Naive thymus-derived CD4-positive, alpha-beta T cell (primary cell): ENCODE measurements at regions of chr17 and their contacts with region 1.

Region 1: GRCh38 chr17:78759203-78759968 is 22.7 kb downstream of the CYTH1 start:
- DNase-seq: peak; percentile 56 to 96 (median 93)
- ATAC-seq: peak; percentile 91
- H3K4me3 ChIP-seq: peak overlapping the region; percentile 53
- H3K4me3 Mint-ChIP-seq: peak overlapping the region; percentile 64 to 85 (median 80)
- H3K27ac ChIP-seq: peak overlapping the region; percentile 93
- H3K27ac Mint-ChIP-seq: peak overlapping the region; percentile 83 to 98 (median 97)
- H3K4me1 ChIP-seq: peaks cover 75 to 77% of the 10 kb centered on the region in 2 donors
- H3K4me1 Mint-ChIP-seq: peaks cover 43 to 88% (median 83%) of the 10 kb centered on the region in 7 donors
- H3K27me3 ChIP-seq: no peaks in the 10 kb centered on the region
- H3K27me3 Mint-ChIP-seq: no peaks in the 10 kb centered on the region

Region 2: DNA sequence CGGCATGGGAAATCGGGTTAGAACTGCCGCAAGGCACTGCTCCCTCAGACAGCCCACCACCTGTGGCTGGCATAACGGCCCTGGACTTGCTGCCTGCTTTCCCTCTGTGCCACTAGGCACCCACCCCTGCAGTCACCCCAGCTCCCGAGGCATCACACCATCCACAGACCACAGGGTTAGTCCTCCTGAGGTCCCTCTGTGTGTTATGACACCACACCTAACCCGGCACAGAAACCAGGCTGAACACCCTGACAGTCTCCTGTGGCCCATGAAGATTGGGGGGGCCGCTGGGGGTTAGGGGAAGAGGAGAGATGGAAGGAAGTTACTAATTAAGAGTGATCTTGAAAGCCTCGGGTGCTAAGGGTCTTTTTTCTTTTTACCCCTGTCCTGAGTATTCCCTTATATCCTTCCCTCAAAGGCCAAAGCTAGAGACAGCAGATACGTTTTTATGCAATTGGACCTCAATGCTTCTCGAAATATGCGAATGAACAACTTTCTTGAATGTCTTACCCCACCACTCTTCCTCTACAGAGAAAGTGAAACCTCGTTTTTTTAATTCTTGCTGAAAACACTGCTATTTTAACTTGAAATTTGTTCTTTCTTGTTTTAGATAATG is 15.7 kb after region 1 on chr17:
- CTCF ChIA-PET with region 1: interaction called, 4 read pairs
- POLR2A ChIA-PET with region 1: interaction called, 24 read pairs
- intact Hi-C with region 1: loop called (anchors 1 kb)
- DNase-seq: peak in 7 of 9 donors; percentile 49 to 71 (median 55)
- ATAC-seq: peak; percentile 55
- H3K4me3 ChIP-seq: peak overlapping the region; percentile 55
- H3K4me3 Mint-ChIP-seq: peak overlapping the region in 8 of 10 donors; percentile 85 to 98 (median 92)
- H3K27ac ChIP-seq: peak overlapping the region; percentile 81
- H3K27ac Mint-ChIP-seq: peak overlapping the region in 8 of 9 donors; percentile 91 to 98 (median 97)
- H3K4me1 ChIP-seq: peaks cover 67 to 71% of the 10 kb centered on the region in 2 donors
- H3K4me1 Mint-ChIP-seq: peaks cover 34 to 79% (median 69%) of the 10 kb centered on the region in 7 donors
- H3K27me3 ChIP-seq: no peaks in the 10 kb centered on the region
- H3K27me3 Mint-ChIP-seq: no peaks in the 10 kb centered on the region

Region 3: DNA sequence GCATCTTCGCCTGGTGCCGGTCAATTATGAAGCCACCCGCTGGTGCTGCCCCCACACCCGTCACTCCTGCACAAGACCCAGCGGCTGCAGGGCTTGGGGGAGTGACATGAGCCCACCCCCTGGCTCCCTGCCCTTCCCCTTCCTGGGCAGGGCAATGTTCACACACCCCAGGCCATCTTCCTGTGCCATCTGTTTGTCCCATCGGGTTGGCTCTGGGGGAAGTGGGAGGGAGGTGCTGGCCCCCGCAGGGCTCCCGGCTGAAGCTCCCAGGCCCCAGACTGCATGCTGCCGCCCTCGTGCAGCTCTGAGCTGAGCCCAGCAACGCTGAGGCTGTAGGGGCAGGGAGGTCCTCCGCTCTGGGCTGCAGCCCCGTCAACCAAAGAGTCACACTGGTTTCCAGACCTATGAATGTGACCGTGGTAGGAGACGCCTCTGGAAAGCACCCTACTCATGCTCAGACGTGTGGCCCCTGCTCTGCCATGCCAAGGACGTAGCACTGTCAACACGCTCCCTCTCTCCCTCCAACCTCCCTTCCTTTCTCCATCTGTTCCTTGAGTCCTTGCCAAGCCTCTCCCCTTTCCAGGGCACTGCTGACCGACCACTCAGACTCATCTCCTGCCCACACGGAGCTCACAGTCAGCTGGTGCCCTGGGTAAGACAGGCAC is 455.7 kb after region 1 on chr17:
- CTCF ChIA-PET with region 1: no interaction called
- POLR2A ChIA-PET with region 1: no interaction called
- intact Hi-C with region 1: no loop called
- DNase-seq: no peak
- ATAC-seq: no peak
- H3K4me3 ChIP-seq: no peak overlapping the region
- H3K4me3 Mint-ChIP-seq: no peak overlapping the region
- H3K27ac ChIP-seq: no peak overlapping the region
- H3K27ac Mint-ChIP-seq: peak overlapping the region in 1 of 9 donors; percentile 72
- H3K4me1 ChIP-seq: no peaks in the 10 kb centered on the region
- H3K4me1 Mint-ChIP-seq: peaks cover 0 to 2% (median 0%) of the 10 kb centered on the region in 7 donors
- H3K27me3 ChIP-seq: no peaks in the 10 kb centered on the region
- H3K27me3 Mint-ChIP-seq: peaks cover 22 to 79% (median 30%) of the 10 kb centered on the region in 5 donors